BJ (cell line): ENCODE measurements at regions of chr2 and their contacts with region 1.

Region 1: GRCh38 chr2:108184419-108184818 is 55.3 kb upstream of the SULT1C3 start:
- DNase-seq: no peak
- H3K4me3 ChIP-seq: no peak overlapping the region
- H3K27me3 ChIP-seq: no peaks in the 10 kb centered on the region
- CTCF ChIP-seq: peak; percentile 38; the same call in 1 of the 2 replicates

Region 2: DNA sequence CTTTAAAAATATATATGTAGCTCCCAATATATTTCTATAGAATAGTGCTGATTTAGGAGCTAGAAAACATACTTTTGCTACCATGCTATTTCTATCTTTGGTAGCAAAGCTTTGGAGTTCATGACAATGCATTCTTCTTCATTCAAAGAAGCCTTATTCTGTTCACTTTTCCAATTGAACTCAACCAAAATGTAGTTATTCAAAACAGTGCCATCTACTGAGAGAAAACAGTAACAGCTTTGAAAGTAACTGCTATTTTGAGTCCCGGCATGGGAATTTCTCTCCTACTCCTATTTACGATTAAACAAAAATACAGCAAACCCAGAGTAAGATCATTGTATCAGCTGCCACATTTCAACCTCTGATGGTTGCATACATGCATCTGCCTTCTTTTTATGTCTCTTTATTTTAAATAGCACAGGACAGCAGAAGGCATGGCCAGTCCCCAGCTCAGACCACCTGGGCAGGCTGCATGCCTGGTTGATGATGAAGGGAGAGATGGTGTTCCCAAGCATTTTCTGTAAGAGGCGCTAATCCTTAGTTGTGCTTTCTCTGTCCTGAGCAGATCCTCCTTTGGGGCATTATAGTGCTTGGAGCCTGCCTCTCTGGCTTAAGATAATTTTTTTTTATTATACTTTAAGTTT is 14.3 kb before region 1 on chr2:
- CTCF ChIA-PET with region 1: interaction called, 11 read pairs
- POLR2A ChIA-PET with region 1: no interaction called
- DNase-seq: no peak
- H3K4me3 ChIP-seq: no peak overlapping the region
- H3K27me3 ChIP-seq: no peaks in the 10 kb centered on the region; the same call in 1 of the 2 replicates
- CTCF ChIP-seq: peak; percentile 48; the same call in 1 of the 2 replicates

Region 3: DNA sequence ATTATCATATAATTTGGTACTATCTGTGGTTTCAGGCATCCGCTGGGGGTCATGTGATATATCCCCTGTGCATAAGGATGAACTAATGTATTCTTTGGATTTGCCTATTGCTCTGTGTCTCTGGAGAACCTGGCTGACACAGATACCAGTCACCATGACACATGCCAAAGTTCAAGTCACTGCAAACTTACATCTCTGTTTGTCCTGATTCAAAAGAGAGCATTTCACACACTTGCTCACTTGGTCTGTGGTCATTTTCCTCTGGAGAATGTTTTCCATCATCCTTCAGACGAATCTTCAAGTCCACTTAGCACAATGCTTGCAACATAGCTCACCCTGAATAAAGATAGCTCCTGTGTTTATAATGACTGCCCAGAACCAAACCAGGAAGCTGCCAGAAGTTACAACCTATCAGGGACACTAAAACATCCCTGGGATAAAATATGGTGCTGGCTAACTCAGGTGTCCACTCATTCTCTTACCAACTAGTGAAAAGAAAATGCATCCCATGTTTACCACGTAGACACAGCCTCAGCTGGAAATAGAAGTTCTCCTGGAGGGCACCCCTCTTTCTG is 73.4 kb after region 1 on chr2:
- CTCF ChIA-PET with region 1: no interaction called
- POLR2A ChIA-PET with region 1: no interaction called
- DNase-seq: no peak
- H3K4me3 ChIP-seq: no peak overlapping the region
- H3K27me3 ChIP-seq: peaks cover 3% of the 10 kb centered on the region; the same call in 1 of the 2 replicates
- CTCF ChIP-seq: no peak